Breast epithelium (tissue), 4 donors: ENCODE measurements at regions of chr11 and their contacts with region 1.

Region 1: GRCh38 chr11:44727373-44728287 is 868 bp downstream of the TSPAN18 start:
- DNase-seq: peak; percentile 57 to 73
- H3K4me3 ChIP-seq: peak overlapping the region; percentile 58 to 82 (median 63)
- H3K27ac ChIP-seq: no peak overlapping the region
- H3K4me1 ChIP-seq: peaks cover 0 to 7% of the 10 kb centered on the region in 2 donors
- H3K27me3 ChIP-seq: peaks cover 0 to 11% of the 10 kb centered on the region in 2 donors
- CTCF ChIP-seq: peak; percentile 81 to 86 (median 81)
- POLR2A ChIP-seq: no peak

Region 2: DNA sequence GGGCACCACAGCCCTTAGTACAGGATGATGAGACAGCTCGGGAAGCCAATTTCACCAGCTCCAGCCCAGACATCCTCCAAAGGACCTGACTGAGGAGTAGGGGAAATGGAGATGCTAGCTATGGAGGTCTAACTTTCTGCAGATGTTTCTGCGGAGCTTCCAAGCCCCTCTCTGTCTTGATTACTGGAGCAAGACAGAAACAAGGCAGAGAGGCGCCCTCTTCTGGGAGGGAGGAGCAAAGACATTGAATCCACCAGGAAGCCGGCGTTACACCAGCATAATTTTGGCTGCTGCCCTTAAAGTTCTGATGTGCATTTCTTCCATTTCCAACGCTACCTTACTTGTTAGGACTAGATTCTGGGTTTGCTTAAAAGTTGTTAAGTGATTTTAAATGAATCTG is 1154.4 kb before region 1 on chr11:
- intact Hi-C with region 1: loop called (anchors 5 kb)
- DNase-seq: no peak
- H3K4me3 ChIP-seq: no peak overlapping the region
- H3K27ac ChIP-seq: no peak overlapping the region
- H3K4me1 ChIP-seq: no peaks in the 10 kb centered on the region
- H3K27me3 ChIP-seq: peaks cover 0 to 75% of the 10 kb centered on the region in 2 donors
- CTCF ChIP-seq: no peak
- POLR2A ChIP-seq: no peak

Region 3: GRCh38 chr11:44785856-44786606 is 58.4 kb after region 1 on chr11:
- intact Hi-C with region 1: no loop called
- DNase-seq: no peak
- H3K4me3 ChIP-seq: no peak overlapping the region
- H3K27ac ChIP-seq: no peak overlapping the region
- H3K4me1 ChIP-seq: no peaks in the 10 kb centered on the region
- H3K27me3 ChIP-seq: no peaks in the 10 kb centered on the region
- CTCF ChIP-seq: no peak
- POLR2A ChIP-seq: no peak

Region 4: GRCh38 chr11:44911029-44911814 is 183.6 kb after region 1 on chr11:
- intact Hi-C with region 1: loop called (anchors 10 kb)
- DNase-seq: peak; percentile 73 to 87
- H3K4me3 ChIP-seq: peak overlapping the region in 2 of 3 donors; percentile 9 to 37
- H3K27ac ChIP-seq: no peak overlapping the region
- H3K4me1 ChIP-seq: no peaks in the 10 kb centered on the region
- H3K27me3 ChIP-seq: no peaks in the 10 kb centered on the region
- CTCF ChIP-seq: peak; percentile 76 to 82 (median 78)
- POLR2A ChIP-seq: no peak

Region 5: DNA sequence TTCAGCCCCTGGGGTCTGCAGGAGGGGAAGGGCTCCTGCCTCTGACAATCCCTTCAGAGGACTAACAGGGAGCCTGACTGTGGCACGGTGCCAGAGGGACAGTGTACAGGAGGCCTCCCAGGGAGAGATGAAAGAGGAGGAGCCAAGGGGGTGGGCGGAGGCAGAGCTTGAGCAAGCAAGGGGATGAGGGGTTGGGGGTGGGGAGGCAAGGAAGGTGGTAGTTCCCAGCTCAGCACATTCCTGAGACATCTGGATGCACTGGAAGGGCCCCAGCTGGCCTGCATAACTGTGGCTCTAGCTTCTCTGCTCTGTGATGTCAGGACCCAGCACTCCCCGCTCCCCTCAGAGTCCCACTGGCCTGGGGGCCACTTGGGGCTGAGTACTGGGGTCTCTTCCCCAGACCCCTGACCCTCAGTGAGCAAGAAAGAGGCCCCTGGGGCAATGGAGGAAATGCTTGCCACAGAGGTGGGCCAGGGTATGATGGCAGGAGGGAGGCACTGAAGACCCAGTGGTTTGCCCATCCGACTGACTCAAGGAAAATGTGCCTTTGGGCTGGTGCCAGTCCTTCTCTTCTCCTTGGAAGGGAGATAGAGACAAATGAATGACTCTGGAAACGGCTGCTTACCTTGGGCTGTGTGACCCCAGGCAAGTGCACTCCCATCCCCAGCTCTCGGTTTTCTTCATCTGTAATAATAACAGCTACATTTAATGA is 1563.1 kb after region 1 on chr11:
- intact Hi-C with region 1: no loop called
- DNase-seq: peak; percentile 78 to 82
- H3K4me3 ChIP-seq: no peak overlapping the region
- H3K27ac ChIP-seq: peak overlapping the region; percentile 15 to 67
- H3K4me1 ChIP-seq: peaks cover 0 to 13% of the 10 kb centered on the region in 2 donors
- H3K27me3 ChIP-seq: no peaks in the 10 kb centered on the region
- CTCF ChIP-seq: no peak
- POLR2A ChIP-seq: no peak